Gastrocnemius medialis (tissue), 4 donors: ENCODE measurements at regions of chr11 and their contacts with region 1.

Region 1: GRCh38 chr11:73597956-73598718 is at the start of gene FAM168A:
- DNase-seq: peak; percentile 93 to 95
- ATAC-seq: peak; percentile 97 to 98
- H3K4me3 ChIP-seq: peak within 1 kb of the TSS; percentile 83 to 99 (median 94)
- H3K27ac ChIP-seq: peak within 1 kb of the TSS; percentile 87 to 93 (median 92)
- H3K4me1 ChIP-seq: peaks cover 25 to 31% of the 10 kb centered on the region in 2 donors
- H3K27me3 ChIP-seq: no peaks in the 10 kb centered on the region
- CTCF ChIP-seq: peak in 4 of 5 experiments; percentile 33 to 41 (median 36)
- POLR2A ChIP-seq: peak; percentile 74 to 77
- total RNA-seq, gene FAM168A: 15.9 to 29.3 (median 21.4) TPM

Region 2: GRCh38 chr11:73307323-73308002 is 290.7 kb before region 1 on chr11:
- in situ Hi-C with region 1: no loop called
- intact Hi-C with region 1: loop called (anchors 2 kb)
- DNase-seq: peak; percentile 88 to 92
- ATAC-seq: peak; percentile 80 to 82
- H3K4me3 ChIP-seq: peak overlapping the region; percentile 65 to 90 (median 79)
- H3K27ac ChIP-seq: peak overlapping the region; percentile 73 to 83 (median 82)
- H3K4me1 ChIP-seq: peaks cover 4 to 18% of the 10 kb centered on the region in 2 donors
- H3K27me3 ChIP-seq: peaks cover 0 to 2% (median 0%) of the 10 kb centered on the region in 3 donors
- CTCF ChIP-seq: peak; percentile 82 to 93 (median 91)
- POLR2A ChIP-seq: peak; percentile 29 to 39

Region 3: DNA sequence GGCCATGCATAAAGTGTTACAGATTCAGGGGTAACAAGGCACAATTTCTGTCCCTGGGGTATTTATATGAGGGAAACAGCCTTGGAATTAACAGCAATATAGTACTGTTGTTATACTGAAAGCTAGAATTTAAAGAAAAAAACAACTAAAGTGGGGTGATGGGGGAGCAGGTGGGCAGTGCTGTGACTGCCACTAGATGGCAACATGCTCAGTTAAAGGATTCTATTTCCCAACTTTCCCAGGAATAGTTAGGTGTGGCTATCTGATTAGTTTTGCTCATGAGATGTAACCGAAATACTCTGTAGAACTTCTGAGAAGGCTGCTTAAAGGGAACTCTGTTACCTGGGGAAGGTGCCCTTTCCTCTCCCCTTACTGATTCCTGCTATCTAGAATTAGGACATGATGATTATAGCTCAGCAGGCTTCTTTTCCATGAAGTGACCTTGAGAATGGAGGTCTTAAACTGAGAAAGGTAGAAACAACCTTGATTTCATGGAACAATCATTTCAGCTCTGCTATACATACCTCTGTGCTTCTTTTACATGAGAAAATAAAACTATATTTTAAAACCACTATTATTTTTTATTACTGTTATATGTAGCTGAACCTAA is 119.3 kb before region 1 on chr11:
- in situ Hi-C with region 1: no loop called
- intact Hi-C with region 1: loop called (anchors 2 kb)
- DNase-seq: no peak
- ATAC-seq: peak; percentile 76 to 95
- H3K4me3 ChIP-seq: no peak overlapping the region
- H3K27ac ChIP-seq: peak overlapping the region in 3 of 4 donors; percentile 11 to 40 (median 20)
- H3K4me1 ChIP-seq: peaks cover 6 to 16% of the 10 kb centered on the region in 2 donors
- H3K27me3 ChIP-seq: no peaks in the 10 kb centered on the region
- CTCF ChIP-seq: peak; percentile 48 to 77 (median 64)
- POLR2A ChIP-seq: no peak

Region 4: GRCh38 chr11:73542175-73542574 is 56.0 kb before region 1 on chr11:
- in situ Hi-C with region 1: loop called in 1 of 4 experiments (anchors 10 kb)
- intact Hi-C with region 1: no loop called
- DNase-seq: no peak
- ATAC-seq: no peak
- H3K4me3 ChIP-seq: no peak overlapping the region
- H3K27ac ChIP-seq: no peak overlapping the region
- H3K4me1 ChIP-seq: peaks cover 6 to 21% of the 10 kb centered on the region in 2 donors
- H3K27me3 ChIP-seq: no peaks in the 10 kb centered on the region
- CTCF ChIP-seq: no peak
- POLR2A ChIP-seq: no peak

Region 5: DNA sequence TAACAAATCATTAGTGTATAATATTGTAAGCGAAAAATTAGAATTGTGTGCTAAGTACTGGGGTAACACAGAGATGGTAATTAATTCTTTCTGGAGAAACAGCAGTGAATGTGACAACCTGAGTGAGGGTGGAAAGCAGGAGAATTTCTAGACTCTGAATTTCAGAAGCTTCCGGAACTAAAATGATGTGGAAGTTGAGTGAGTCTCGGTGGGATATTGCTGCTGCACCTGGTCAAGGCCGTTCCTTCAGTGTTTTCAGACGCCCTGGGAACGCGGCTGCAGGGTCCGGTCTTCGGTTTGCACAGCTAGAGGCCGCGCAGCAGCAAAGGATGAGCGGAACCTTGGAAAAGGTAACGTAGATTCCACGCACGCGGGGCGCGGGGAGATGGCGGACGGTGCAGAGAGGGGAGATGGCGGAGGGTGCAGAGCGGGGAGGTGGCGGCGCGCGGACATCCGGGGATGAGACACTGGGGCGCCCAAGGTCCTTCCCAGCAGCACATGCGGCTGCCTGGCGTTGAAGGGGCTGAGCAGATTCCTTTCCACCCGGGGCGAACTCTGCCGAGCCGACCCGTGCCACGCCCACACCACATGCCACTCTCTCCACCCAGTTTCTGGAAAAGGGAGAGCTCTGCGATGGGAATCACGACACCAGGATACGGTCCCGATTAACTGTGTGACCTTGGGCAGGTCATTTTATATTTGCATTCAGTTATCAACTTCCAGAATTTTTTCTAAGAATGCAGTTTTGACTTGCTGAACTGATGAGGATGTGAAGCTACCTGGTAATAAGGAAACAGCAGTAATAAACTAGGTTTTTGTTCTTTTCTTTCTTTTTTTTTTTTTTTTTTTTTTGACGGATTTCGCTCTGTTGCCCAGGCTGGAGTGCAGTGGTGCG is 189.8 kb after region 1 on chr11 and contains the start of gene MRPL48:
- in situ Hi-C with region 1: no loop called
- intact Hi-C with region 1: loop called (anchors 5 kb)
- DNase-seq: peak; percentile 87 to 93
- ATAC-seq: peak; percentile 93 to 96
- H3K4me3 ChIP-seq: peak within 1 kb of the TSS; percentile 79 to 90 (median 88)
- H3K27ac ChIP-seq: peak within 1 kb of the TSS; percentile 84 to 90 (median 85)
- H3K4me1 ChIP-seq: peaks cover 8 to 16% of the 10 kb centered on the region in 2 donors
- H3K27me3 ChIP-seq: no peaks in the 10 kb centered on the region
- CTCF ChIP-seq: no peak
- POLR2A ChIP-seq: peak in 1 of 2 donors; percentile 12
- total RNA-seq, gene MRPL48: 9.0 to 29.1 (median 13.4) TPM